ENCODE measurements at regions of chrX and their contacts with region 1.

Region 1: GRCh38 chrX:68822641-68823410 is 6.0 kb upstream of the EFNB1 start:
- DNase-seq: no peak
- H3K4me3 ChIP-seq: no peak overlapping the region
- H3K27ac ChIP-seq: no peak overlapping the region
- H3K4me1 ChIP-seq: no peaks in the 10 kb centered on the region
- H3K27me3 ChIP-seq: no peaks in the 10 kb centered on the region
- CTCF ChIP-seq: peak; percentile 49 to 56 (median 52)
- EP300 ChIP-seq: no peak
- POLR2A ChIP-seq: no peak

Region 2: GRCh38 chrX:69060631-69061408 is 238.0 kb after region 1 on chrX:
- in situ Hi-C with region 1: loop called in 1 of 4 experiments (anchors 25 kb)
- intact Hi-C with region 1: loop called (anchors 2 kb)
- DNase-seq: peak; percentile 46
- H3K4me3 ChIP-seq: no peak overlapping the region
- H3K27ac ChIP-seq: no peak overlapping the region
- H3K4me1 ChIP-seq: no peaks in the 10 kb centered on the region
- H3K27me3 ChIP-seq: no peaks in the 10 kb centered on the region
- CTCF ChIP-seq: peak in 4 of 5 experiments; percentile 27 to 42 (median 35)
- EP300 ChIP-seq: no peak
- POLR2A ChIP-seq: no peak

Measured in transverse colon (tissue), 4 donors.